Common myeloid progenitor, CD34-positive (primary cell): ENCODE measurements at regions of chr14 and their contacts with region 1.

Region 1: DNA sequence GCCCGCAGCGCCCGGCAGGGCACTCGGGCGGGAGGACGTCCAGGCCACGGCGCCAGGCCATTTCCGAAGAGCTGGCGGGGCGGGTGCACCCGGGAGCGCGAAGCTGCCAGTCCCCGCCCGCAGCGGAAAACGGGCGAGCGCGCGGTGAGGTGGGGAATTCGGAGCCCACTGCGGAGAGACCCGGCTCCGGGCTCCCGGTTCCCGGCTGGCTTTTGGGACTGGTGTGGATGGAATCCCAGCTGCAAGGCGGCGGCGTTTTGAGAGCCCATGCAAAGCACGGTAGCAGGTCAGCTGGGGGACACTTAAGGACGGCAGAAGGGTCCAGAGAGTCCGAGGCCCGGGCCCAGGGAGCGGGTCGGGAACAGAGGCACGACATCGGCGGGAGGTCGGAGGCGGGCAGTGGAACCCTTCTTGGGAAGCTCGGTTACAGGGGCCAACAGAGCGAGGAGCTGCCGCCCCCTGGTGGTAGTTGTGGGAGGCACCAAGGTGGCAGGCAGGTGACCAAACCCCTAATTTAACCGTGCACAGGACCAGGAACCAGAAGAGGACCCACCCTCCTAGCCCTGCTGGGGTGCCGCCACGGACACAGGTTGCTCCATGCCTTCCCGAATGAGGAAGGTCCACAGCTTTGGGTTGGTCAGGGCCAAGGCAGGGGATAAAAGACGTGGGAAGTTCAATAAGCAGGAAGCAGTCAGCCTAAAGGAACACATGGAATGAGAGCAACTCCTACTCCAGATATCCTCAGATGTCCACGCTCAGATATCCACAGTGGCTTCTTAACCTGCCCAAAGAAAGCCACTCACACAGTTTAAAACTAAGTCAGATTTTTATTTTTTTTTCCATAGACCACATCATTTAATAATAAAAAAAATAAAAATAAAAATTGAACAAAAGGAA is 685 bp upstream of the CDH24 start:
- DNase-seq: peak; percentile 80 to 90 (median 86)
- H3K4me3 ChIP-seq: peak overlapping the region; percentile 37 to 82 (median 79)
- H3K27ac ChIP-seq: no peak overlapping the region
- H3K4me1 ChIP-seq: peaks cover 0 to 21% (median 19%) of the 10 kb centered on the region in 4 experiments
- H3K27me3 ChIP-seq: peaks cover 0 to 7% (median 5%) of the 10 kb centered on the region in 5 experiments

Region 2: DNA sequence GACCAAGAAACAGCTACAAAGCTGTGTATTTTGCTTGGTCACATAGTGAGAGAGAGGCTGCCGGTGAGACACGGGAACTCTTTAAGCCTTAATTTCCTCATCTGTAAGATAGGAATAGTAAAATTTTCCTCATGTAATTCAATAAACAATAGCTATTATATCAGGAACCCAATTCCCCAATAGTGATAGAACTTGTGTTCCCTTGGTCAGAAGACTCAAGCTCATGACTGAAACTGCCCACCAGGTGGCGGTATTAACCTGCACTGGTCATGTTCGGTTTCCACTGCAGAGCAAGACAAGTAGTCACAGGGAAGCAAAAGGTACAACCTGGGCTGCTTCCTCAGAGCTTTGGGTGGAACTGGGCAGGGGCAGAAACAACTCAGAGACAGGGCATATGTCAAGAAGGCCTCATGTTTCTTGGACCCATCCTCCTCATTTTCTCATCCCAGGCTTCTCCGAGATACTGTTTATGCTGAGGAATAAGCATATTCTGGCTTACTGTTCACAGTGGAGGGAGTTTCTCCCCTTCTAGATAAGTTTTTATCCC is 71.4 kb before region 1 on chr14:
- CTCF ChIA-PET with region 1: interaction called, 933 read pairs
- POLR2A ChIA-PET with region 1: interaction called, 5 read pairs
- DNase-seq: peak; percentile 88 to 94 (median 89)
- H3K4me3 ChIP-seq: no peak overlapping the region
- H3K27ac ChIP-seq: no peak overlapping the region
- H3K4me1 ChIP-seq: peaks cover 4 to 18% (median 14%) of the 10 kb centered on the region in 4 experiments
- H3K27me3 ChIP-seq: peaks cover 0 to 7% (median 2%) of the 10 kb centered on the region in 5 experiments

Region 3: DNA sequence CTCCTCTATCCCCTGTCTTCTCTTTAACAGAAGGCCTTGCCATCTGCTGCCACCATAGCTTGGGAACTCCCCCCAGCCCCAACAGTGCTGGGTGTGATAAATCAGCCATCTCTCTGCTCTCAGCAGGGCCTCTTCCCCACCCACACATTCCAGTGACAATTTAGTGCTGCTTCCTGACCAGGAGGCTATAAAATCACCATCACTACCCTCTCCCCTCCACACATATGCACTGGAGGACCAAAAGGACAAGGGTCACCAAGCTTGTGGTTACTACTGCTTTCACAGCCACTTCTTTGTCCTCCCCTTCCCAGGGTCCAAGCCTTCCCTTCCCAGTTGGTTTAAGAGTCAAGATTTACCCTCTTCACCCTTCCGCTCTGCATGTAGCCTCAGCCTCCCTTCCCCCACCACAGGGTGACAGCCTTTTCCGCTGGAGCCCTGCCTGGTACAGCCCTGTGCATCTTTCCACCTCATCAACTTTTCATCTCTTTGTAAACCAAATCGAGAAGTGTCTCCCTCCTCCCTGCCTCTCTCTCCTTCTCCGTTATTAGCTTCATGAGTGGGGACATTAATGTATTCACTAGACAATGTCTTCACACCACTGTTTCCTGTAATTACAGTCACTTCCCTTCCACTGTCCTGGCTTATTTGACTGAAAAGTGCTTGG is 32.7 kb before region 1 on chr14:
- CTCF ChIA-PET with region 1: interaction called, 31 read pairs
- POLR2A ChIA-PET with region 1: no interaction called
- DNase-seq: no peak
- H3K4me3 ChIP-seq: no peak overlapping the region
- H3K27ac ChIP-seq: no peak overlapping the region
- H3K4me1 ChIP-seq: peaks cover 0 to 7% (median 4%) of the 10 kb centered on the region in 4 experiments
- H3K27me3 ChIP-seq: no peaks in the 10 kb centered on the region

Region 4: DNA sequence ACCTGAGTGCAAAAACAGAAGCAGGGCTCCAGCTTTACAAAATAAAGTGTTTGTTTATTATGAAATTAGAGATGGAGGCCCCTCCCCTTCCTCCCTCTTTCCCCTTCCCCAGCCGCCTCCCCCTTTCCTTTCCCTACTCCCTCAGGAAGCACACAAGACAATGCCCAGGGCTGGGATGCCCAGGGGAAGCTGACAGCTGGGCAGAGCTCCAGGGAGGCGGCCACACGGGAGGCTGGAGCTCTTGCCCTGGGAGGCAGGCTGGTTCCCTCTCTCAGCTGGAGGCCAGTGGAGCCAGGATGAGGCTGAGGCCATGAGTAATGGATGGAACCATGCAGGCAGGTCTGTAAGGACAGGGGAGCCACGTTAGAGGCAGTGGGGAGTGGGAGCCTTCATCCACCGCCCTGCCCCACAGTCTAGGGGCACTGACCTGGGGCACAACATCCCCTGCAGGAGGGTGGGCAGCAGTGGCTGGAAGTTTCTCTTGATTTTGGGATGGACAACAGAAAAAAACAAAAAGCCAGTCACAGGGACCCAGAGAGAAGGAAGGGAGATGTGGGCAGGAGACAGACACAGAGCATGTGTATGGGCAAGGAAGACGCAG is 10.9 kb before region 1 on chr14:
- CTCF ChIA-PET with region 1: interaction called, 44 read pairs
- POLR2A ChIA-PET with region 1: no interaction called
- DNase-seq: no peak
- H3K4me3 ChIP-seq: no peak overlapping the region
- H3K27ac ChIP-seq: no peak overlapping the region
- H3K4me1 ChIP-seq: peaks cover 0 to 5% (median 0%) of the 10 kb centered on the region in 4 experiments
- H3K27me3 ChIP-seq: no peaks in the 10 kb centered on the region

Region 5: GRCh38 chr14:23076785-23077408 is 18.9 kb after region 1 on chr14:
- CTCF ChIA-PET with region 1: interaction called, 22 read pairs
- POLR2A ChIA-PET with region 1: no interaction called
- DNase-seq: peak; percentile 35 to 65 (median 51)
- H3K4me3 ChIP-seq: no peak overlapping the region
- H3K27ac ChIP-seq: no peak overlapping the region
- H3K4me1 ChIP-seq: peaks cover 0 to 6% (median 5%) of the 10 kb centered on the region in 4 experiments
- H3K27me3 ChIP-seq: no peaks in the 10 kb centered on the region